ENCODE measurements at regions of chr6 and their contacts with region 1.

Region 1: GRCh38 chr6:136103763-136104311 is 146.3 kb downstream of the MTFR2 start:
- DNase-seq: peak; percentile 80
- ATAC-seq: peak; percentile 94

Region 2: GRCh38 chr6:136158387-136158821 is 54.6 kb after region 1 on chr6:
- intact Hi-C with region 1: loop called (anchors 10 kb)
- DNase-seq: peak; percentile 82
- ATAC-seq: peak; percentile 94

Measured in Right ventricle myocardium superior (tissue), 1 donor.